PC-3 (cell line): ENCODE measurements at regions of chr18 and their contacts with region 1.

Region 1: GRCh38 chr18:9474983-9475642 is at the start of gene RALBP1:
- DNase-seq: peak; percentile 99
- ATAC-seq: peak; percentile 93
- H3K4me3 ChIP-seq: peak within 1 kb of the TSS; percentile 93
- H3K27ac ChIP-seq: peak within 1 kb of the TSS; percentile 92
- H3K4me1 ChIP-seq: peaks cover 15% of the 10 kb centered on the region
- H3K27me3 ChIP-seq: no peaks in the 10 kb centered on the region
- CTCF ChIP-seq: peak; percentile 33
- total RNA-seq, gene RALBP1: 89.8 and 94.3 TPM in 2 replicates

Region 2: GRCh38 chr18:8020132-8020846 is 1454.8 kb before region 1 on chr18:
- CTCF ChIA-PET with region 1: no interaction called
- POLR2A ChIA-PET with region 1: no interaction called
- intact Hi-C with region 1: no loop called
- DNase-seq: no peak
- ATAC-seq: no peak
- H3K4me3 ChIP-seq: no peak overlapping the region
- H3K27ac ChIP-seq: no peak overlapping the region
- H3K4me1 ChIP-seq: no peaks in the 10 kb centered on the region
- H3K27me3 ChIP-seq: no peaks in the 10 kb centered on the region
- CTCF ChIP-seq: no peak

Region 3: GRCh38 chr18:9191658-9192256 is 283.4 kb before region 1 on chr18:
- CTCF ChIA-PET with region 1: no interaction called
- POLR2A ChIA-PET with region 1: no interaction called
- intact Hi-C with region 1: no loop called
- DNase-seq: no peak
- ATAC-seq: no peak; the same call in 1 of the 2 replicates
- H3K4me3 ChIP-seq: no peak overlapping the region
- H3K27ac ChIP-seq: no peak overlapping the region
- H3K4me1 ChIP-seq: no peaks in the 10 kb centered on the region
- H3K27me3 ChIP-seq: no peaks in the 10 kb centered on the region
- CTCF ChIP-seq: no peak

Region 4: GRCh38 chr18:9366192-9366591 is 108.9 kb before region 1 on chr18:
- CTCF ChIA-PET with region 1: no interaction called
- POLR2A ChIA-PET with region 1: no interaction called
- intact Hi-C with region 1: loop called (anchors 2 kb)
- DNase-seq: peak; percentile 90
- ATAC-seq: peak; percentile 48
- H3K4me3 ChIP-seq: no peak overlapping the region
- H3K27ac ChIP-seq: 0 out of 2 replicates have a peak overlapping the region, but pooled peaks have one; percentile 72
- H3K4me1 ChIP-seq: peaks cover 42% of the 10 kb centered on the region
- H3K27me3 ChIP-seq: no peaks in the 10 kb centered on the region
- CTCF ChIP-seq: peak; percentile 79

Region 5: DNA sequence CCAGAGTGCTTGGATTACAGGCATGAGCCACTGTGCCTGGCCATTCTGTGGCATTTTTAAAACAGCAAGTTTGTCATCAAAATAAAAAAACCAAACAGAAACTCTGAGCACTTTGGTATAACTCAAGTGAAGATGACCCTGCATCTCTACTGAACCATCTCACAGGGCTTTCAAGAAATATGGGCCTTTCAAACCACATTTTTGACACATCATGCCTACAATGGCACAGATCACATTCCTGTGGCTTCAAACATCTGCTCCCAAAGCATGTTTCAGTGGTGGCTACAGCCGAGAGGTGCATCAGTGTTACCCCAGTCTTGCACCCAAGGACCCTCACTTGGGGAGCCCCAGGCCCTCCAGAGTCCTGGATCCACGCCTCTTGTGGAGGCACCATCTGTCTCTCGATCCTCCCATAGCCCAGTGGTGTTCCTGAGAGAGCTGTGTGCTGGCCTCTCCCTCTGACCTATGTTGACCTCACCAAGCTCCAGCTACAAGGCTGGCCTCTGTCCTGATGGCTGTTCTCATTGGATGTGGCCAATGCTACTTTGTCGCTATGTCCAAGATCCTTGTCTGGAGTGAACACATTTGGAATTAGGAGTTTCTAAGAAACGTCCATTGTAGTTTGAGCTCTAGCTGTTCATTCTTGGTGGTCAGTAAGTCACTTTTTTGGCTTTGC is 55.0 kb before region 1 on chr18:
- CTCF ChIA-PET with region 1: no interaction called
- POLR2A ChIA-PET with region 1: no interaction called
- intact Hi-C with region 1: loop called (anchors 2 kb)
- DNase-seq: no peak
- ATAC-seq: no peak
- H3K4me3 ChIP-seq: no peak overlapping the region
- H3K27ac ChIP-seq: no peak overlapping the region
- H3K4me1 ChIP-seq: peaks cover 16% of the 10 kb centered on the region
- H3K27me3 ChIP-seq: no peaks in the 10 kb centered on the region
- CTCF ChIP-seq: no peak

Region 6: DNA sequence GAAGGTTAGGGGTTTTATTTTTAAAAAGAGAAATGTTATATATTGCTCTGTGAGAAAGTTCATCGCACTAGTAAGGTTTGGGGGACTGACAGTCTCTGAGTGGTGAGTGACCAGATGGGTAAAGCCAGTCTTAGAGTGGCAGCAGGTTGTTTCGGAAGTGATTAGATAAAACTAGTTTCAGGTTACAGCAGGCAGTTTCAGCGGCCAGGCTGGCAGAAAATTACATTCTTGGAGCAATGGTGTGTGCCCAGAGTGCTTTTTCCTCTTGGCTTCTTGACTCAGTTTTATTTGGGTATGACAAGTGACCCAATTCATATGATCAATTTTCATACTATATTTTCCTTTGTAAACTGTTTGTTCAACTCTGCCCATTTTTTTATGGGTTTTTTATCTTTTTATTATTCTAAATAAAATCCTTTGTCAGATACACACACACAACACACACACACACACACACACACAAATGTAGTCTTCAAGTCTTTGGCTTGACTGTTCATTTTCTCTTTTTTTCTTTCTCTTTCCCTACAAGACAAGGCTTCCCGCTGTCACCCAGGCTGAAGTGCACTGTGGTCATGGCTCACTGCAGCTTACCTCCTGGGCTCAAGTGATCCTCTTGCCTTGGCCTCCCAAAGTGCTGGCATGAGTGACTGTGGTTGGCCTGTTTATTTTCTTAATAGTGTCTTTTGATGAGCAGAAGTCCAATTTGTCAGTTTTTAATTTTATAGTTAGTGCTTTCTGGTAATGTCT is 31.1 kb after region 1 on chr18:
- CTCF ChIA-PET with region 1: no interaction called
- POLR2A ChIA-PET with region 1: no interaction called
- intact Hi-C with region 1: no loop called
- DNase-seq: peak; percentile 79
- ATAC-seq: peak; percentile 91
- H3K4me3 ChIP-seq: peak overlapping the region; percentile 8; the same call in 1 of the 2 replicates
- H3K27ac ChIP-seq: peak overlapping the region; percentile 37
- H3K4me1 ChIP-seq: peaks cover 20% of the 10 kb centered on the region
- H3K27me3 ChIP-seq: no peaks in the 10 kb centered on the region
- CTCF ChIP-seq: no peak